ENCODE measurements at regions of chr13 and their contacts with region 1.

Region 1: GRCh38 chr13:42110410-42111155 is 62.1 kb downstream of the DGKH start:
- DNase-seq: no peak
- ATAC-seq: peak in 1 of 2 donors; percentile 68
- H3K4me3 ChIP-seq: no peak overlapping the region
- H3K27ac ChIP-seq: no peak overlapping the region
- H3K4me1 ChIP-seq: peaks cover 8% of the 10 kb centered on the region
- H3K27me3 ChIP-seq: no peaks in the 10 kb centered on the region

Region 2: GRCh38 chr13:41668130-41668757 is 442.3 kb before region 1 on chr13:
- intact Hi-C with region 1: loop called (anchors 5 to 10 kb)
- DNase-seq: peak in 2 of 3 donors; percentile 23 to 56
- ATAC-seq: peak; percentile 94 to 97
- H3K4me3 ChIP-seq: no peak overlapping the region
- H3K27ac ChIP-seq: no peak overlapping the region
- H3K4me1 ChIP-seq: no peaks in the 10 kb centered on the region
- H3K27me3 ChIP-seq: no peaks in the 10 kb centered on the region